Spleen (tissue), 13 donors: ENCODE measurements at regions of chr9 and their contacts with region 1.

Region 1: DNA sequence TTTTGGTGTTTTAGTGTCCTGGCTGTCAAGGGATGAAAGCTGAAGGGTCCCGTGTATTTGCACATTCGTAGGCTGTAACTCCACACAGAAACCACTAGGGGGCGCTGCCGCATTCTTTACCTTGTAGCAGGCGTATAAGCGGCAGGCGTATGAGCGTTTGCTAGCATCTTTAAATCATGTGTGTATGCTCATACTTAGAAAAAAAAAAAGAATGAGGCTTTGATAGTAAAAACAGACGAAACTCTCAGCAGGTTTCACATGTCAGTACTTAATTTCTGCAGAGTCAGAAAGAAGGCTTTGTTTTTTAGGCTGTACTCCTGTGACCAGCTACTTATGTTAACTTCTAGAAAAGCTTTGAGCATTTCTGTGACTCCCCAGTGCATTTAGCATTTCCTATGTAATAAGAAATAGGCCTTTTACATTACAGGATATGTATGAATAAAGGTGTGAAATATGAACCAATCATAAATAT is 218.8 kb upstream of the ADAMTSL1 start:
- DNase-seq: peak; percentile 90
- H3K4me3 ChIP-seq: no peak overlapping the region
- H3K27ac ChIP-seq: no peak overlapping the region
- H3K4me1 ChIP-seq: peaks cover 0 to 5% (median 0%) of the 10 kb centered on the region in 6 donors
- H3K27me3 ChIP-seq: peaks cover 0 to 16% (median 0%) of the 10 kb centered on the region in 7 donors
- CTCF ChIP-seq: peak; percentile 61 to 91 (median 82)
- POLR2A ChIP-seq: no peak

Region 2: GRCh38 chr9:18429070-18429469 is 173.9 kb after region 1 on chr9:
- intact Hi-C with region 1: no loop called
- DNase-seq: no peak
- H3K4me3 ChIP-seq: no peak overlapping the region
- H3K27ac ChIP-seq: no peak overlapping the region
- H3K4me1 ChIP-seq: no peaks in the 10 kb centered on the region
- H3K27me3 ChIP-seq: no peaks in the 10 kb centered on the region
- CTCF ChIP-seq: no peak
- POLR2A ChIP-seq: no peak

Region 3: DNA sequence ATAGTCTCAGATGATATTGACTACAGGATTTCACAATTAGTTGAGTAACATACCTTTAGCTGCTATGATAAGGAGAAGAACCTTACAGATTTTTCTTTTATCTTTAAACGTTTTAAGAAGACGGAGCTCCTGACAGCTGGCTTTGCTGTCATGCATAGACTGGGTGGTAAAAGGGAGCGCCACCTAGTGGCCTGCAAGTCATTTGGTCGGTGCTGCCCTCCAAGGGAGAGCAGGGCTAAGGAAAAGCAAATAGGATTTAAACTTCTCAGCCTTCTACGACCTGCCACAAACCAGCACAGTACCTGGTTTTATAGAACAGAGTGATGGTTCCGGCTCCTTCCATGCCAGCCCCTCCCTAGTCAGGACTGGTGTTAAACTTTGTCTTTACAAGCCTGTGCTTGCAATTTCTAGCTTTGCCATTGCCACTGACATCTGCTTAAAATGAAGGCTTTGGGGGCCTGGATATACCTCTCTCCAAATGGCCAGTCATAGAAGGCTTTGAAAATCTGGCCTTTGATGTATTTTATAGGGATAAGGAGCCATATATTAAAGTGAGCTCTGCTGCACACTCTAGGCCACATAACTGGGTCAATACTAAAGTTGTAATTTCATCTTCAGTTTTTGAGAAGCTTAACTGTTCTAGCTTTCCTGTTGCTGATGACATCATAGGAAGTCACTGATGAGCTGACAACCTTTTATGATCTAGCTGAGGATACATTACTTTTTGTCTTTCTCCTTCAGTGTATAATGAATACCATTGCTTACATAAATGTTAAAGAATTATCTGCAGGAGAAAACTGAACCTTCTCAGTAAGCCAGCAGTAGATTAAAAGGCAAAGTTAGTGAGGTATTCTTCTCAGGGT is 187.7 kb after region 1 on chr9:
- intact Hi-C with region 1: loop called (anchors 10 kb)
- DNase-seq: peak; percentile 71
- H3K4me3 ChIP-seq: no peak overlapping the region
- H3K27ac ChIP-seq: no peak overlapping the region
- H3K4me1 ChIP-seq: peaks cover 0 to 10% (median 2%) of the 10 kb centered on the region in 6 donors
- H3K27me3 ChIP-seq: peaks cover 0 to 19% (median 2%) of the 10 kb centered on the region in 7 donors
- CTCF ChIP-seq: peak in 9 of 11 experiments; percentile 47 to 81 (median 75)
- POLR2A ChIP-seq: no peak

Region 4: DNA sequence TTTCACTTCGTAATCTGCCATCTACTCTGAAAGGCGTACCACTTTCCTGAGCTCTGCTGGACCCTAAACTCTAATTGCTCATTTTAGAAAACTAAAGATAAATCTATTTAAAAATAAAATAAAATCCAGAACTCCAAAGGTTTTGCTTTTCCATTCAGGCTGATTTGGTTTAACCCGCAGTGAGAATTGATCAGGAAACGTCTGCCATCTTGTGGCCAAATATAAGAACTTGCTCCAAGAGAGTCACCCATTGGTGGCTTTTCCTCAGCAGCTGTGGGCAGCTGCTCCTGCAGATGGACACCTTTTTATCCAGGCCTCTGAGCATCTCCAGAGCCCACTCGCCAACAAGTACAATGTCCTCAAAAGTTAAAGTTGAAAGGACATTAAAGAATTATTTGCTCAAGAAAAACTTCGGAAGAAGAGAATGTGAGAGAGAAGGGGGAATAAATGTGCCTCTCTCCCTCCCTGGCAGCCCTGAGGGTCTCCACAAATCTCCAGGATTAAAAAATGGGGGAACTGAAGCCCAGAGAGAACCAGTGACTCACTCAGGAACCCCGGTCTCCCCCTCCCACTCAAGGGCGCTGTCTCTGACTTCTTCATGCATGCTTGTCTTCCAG is 773.7 kb after region 1 on chr9:
- intact Hi-C with region 1: loop called (anchors 5 kb)
- DNase-seq: no peak
- H3K4me3 ChIP-seq: no peak overlapping the region
- H3K27ac ChIP-seq: no peak overlapping the region
- H3K4me1 ChIP-seq: peaks cover 0 to 9% (median 0%) of the 10 kb centered on the region in 6 donors
- H3K27me3 ChIP-seq: peaks cover 0 to 18% (median 0%) of the 10 kb centered on the region in 7 donors
- CTCF ChIP-seq: peak in 10 of 11 experiments; percentile 27 to 86 (median 73)
- POLR2A ChIP-seq: no peak

Region 5: DNA sequence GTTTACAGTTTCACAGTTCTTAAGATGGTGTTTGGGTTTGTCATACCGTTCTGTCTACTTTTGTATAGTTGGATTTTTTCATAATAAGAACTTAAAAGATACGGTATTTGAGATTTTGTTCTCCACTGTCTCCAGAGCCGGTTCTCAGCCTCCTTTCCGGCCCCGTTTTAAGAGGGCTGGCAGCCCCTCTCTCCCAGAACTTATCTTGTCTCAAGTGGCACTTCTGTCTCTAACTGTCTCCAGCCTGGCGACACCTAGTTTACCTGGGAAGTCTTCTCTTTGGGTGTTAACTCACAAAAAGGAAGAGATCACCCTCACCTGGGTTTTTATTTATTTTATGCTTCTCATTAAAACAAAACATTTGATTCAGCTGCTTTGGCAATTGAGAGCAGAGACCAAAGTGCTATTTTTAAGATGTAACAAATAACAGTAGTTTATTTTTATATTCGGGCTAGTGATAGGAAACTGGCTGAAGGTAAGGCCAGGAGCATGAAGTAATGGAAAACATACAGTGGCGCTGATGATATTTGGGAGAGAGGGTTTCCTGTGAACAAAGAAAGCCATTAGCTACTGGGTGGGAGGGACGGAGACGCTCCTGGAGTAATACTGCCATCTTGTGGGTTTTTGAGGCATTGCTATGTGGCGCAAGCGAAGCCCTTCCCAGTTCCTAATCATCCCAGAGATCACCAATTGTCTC is 1202.0 kb after region 1 on chr9:
- intact Hi-C with region 1: loop called (anchors 10 kb)
- DNase-seq: no peak
- H3K4me3 ChIP-seq: peak overlapping the region in 2 of 8 donors; percentile 17 to 37
- H3K27ac ChIP-seq: no peak overlapping the region
- H3K4me1 ChIP-seq: peaks cover 0 to 17% (median 9%) of the 10 kb centered on the region in 6 donors
- H3K27me3 ChIP-seq: no peaks in the 10 kb centered on the region
- CTCF ChIP-seq: peak; percentile 87 to 97 (median 95)
- POLR2A ChIP-seq: no peak